ENCODE measurements at regions of chr5 and their contacts with region 1.

Region 1: DNA sequence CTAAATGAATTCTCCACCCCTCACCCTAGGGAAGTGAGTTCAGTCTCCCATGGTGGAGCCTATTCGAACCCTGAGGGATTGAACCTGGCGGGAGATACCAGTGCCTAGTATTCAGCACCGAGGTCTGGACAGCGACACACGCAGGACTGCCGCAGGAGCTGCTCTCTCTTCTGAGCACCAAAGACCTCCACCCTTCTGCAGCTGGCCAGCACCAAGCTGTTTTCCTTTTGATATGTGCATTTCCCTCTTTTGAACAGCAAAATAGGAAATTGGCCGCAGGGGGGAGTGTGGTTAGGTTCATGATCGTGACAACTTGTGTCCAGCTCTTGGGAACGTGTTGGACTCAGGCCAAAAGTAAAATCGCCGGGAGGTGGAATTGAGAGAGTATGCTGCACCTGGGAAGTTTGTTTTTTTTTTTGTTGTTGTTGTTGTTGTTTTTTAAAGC is 1.2 kb upstream of the PCSK1 start:
- DNase-seq: peak; percentile 75
- H3K4me3 ChIP-seq: no peak overlapping the region
- H3K27ac ChIP-seq: no peak overlapping the region
- H3K4me1 ChIP-seq: peaks cover 22% of the 10 kb centered on the region
- H3K27me3 ChIP-seq: peaks cover 27 to 34% of the 10 kb centered on the region in 2 experiments
- CTCF ChIP-seq: peak in 1 of 2 donors; percentile 10
- POLR2A ChIP-seq: no peak

Region 2: DNA sequence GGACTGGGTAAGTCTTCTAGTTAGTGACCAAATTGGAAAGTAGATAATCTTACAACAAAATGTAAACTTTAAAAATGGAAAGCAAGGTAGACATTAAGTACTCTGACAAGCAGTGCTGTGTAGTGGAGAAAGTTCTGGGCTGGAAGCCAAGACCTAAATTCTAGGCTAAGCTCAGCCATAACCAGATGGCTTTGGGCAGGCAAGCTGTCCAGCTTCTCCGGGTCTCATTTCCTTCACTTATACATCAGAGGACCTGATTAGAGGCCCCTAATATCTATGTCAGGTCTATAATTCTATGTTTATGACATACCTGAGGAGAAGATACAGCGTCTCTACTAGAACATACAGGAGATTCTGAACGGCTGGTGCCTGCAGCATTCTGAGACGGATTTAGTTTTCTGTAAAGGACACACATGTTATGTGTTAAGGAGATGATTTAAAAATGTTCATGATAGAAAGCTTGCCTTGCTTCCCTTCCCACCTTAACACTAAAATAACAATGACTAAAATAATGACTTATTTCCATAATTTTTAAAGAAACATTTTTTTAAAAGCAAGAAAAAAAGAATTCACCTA is 533.8 kb before region 1 on chr5:
- CTCF ChIA-PET with region 1: no interaction called
- POLR2A ChIA-PET with region 1: no interaction called
- dilution Hi-C with region 1: no loop called
- intact Hi-C with region 1: no loop called
- DNase-seq: no peak
- H3K4me3 ChIP-seq: no peak overlapping the region
- H3K27ac ChIP-seq: no peak overlapping the region
- H3K4me1 ChIP-seq: peaks cover 8% of the 10 kb centered on the region
- H3K27me3 ChIP-seq: no peaks in the 10 kb centered on the region
- CTCF ChIP-seq: no peak
- POLR2A ChIP-seq: no peak

Region 3: DNA sequence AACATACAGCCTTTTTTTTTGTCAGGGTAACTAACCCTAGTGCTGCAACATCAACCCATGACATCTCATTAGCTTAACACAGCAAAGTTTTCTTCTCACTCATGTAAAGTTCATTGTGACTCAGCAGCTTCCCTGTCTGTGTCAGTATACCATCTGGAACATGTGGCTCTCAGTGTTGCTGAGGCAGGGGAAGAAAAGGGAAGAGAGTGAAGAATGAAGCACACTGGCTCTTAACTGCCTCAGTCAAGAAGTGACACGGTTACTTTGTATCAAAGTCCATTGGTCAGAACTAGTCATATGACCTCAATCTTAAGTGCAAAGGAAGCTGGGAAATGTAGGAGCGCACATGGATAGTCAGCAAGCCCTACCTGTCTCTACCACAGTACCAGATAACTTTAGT is 287.5 kb before region 1 on chr5:
- CTCF ChIA-PET with region 1: no interaction called
- POLR2A ChIA-PET with region 1: no interaction called
- dilution Hi-C with region 1: no loop called
- intact Hi-C with region 1: no loop called
- DNase-seq: peak; percentile 6
- H3K4me3 ChIP-seq: no peak overlapping the region
- H3K27ac ChIP-seq: no peak overlapping the region
- H3K4me1 ChIP-seq: no peaks in the 10 kb centered on the region
- H3K27me3 ChIP-seq: no peaks in the 10 kb centered on the region
- CTCF ChIP-seq: no peak
- POLR2A ChIP-seq: no peak

Region 4: DNA sequence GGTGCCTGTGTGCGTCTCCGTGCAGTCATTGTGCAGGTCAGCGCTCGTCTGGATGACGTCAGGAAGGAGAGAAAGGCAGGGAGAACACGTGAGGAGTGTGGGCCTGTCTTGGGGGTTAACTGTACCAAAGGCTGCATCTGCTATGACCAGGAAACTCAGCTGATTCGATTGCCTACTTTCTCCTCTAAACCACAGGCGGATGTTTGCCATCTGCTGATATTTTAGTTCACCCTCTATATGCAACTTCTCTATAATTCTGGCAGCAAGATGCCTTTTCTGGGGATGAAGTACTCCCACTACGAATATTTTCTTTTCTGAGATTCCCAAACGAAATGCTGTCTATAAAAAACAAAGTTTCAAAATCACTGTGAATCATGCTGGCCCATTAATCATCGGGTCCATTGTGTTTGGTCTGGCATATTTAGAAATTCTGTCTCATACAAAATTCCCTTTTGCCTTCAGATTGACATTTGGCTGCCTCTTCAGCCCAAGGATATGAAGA is 25.9 kb before region 1 on chr5:
- CTCF ChIA-PET with region 1: interaction called, 7 read pairs
- POLR2A ChIA-PET with region 1: no interaction called
- dilution Hi-C with region 1: no loop called
- intact Hi-C with region 1: loop called (anchors 2 kb)
- DNase-seq: peak; percentile 89
- H3K4me3 ChIP-seq: no peak overlapping the region
- H3K27ac ChIP-seq: peak overlapping the region; percentile 84
- H3K4me1 ChIP-seq: peaks cover 33% of the 10 kb centered on the region
- H3K27me3 ChIP-seq: no peaks in the 10 kb centered on the region
- CTCF ChIP-seq: no peak
- POLR2A ChIP-seq: no peak

Region 5: DNA sequence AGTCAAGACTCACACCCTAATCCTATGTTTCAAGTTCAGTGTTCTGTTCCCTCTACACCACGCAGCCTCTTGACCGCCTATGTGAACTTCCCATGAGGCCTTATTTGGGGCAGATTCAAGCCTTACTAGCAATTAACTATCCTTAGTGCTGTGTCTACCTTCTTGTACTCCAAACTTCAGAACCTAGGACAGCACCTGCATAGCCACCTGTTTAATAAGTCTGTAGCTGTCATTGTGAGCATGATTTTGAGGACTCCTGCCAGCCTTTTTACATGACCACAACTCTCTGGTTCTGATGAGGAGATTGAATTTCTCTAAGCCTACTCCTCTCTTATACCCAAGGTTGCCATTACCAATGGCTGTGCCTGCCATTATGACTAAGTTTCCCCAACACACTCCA is 49.7 kb after region 1 on chr5:
- CTCF ChIA-PET with region 1: interaction called, 3 read pairs
- POLR2A ChIA-PET with region 1: no interaction called
- dilution Hi-C with region 1: no loop called
- intact Hi-C with region 1: loop called (anchors 1 kb)
- DNase-seq: peak; percentile 48
- H3K4me3 ChIP-seq: no peak overlapping the region
- H3K27ac ChIP-seq: no peak overlapping the region
- H3K4me1 ChIP-seq: no peaks in the 10 kb centered on the region
- H3K27me3 ChIP-seq: no peaks in the 10 kb centered on the region
- CTCF ChIP-seq: no peak
- POLR2A ChIP-seq: no peak

Region 6: DNA sequence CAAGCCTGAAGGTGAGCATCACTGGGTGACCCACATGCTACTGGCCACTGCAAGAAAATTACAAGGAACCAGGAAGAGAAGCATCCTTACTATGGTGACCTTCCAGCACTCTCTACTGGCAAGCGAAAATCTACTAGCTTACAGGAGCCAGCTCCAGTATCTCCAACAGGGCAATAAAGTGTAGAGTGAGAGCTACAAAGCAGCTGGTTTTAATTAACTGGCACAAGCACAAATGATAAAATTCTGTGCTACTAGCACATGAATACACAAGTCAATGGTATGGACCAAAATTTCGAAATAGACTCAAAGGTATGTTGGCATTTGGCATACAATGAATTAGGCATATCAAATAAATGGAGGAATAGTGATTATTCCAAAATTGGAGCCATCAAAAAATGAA is 114.7 kb after region 1 on chr5:
- CTCF ChIA-PET with region 1: no interaction called
- POLR2A ChIA-PET with region 1: no interaction called
- dilution Hi-C with region 1: no loop called
- intact Hi-C with region 1: no loop called
- DNase-seq: no peak
- H3K4me3 ChIP-seq: no peak overlapping the region
- H3K27ac ChIP-seq: no peak overlapping the region
- H3K4me1 ChIP-seq: no peaks in the 10 kb centered on the region
- H3K27me3 ChIP-seq: no peaks in the 10 kb centered on the region
- CTCF ChIP-seq: no peak
- POLR2A ChIP-seq: no peak

Measured in endothelial cell of umbilical vein (primary cell).